AG04450 (cell line): ENCODE measurements at regions of chr6 and their contacts with region 1.

Region 1: GRCh38 chr6:147227770-147228320 is 23.6 kb downstream of the STXBP5 start:
- DNase-seq: no peak
- H3K4me3 ChIP-seq: no peak overlapping the region
- H3K27ac ChIP-seq: no peak overlapping the region
- H3K27me3 ChIP-seq: no peaks in the 10 kb centered on the region
- CTCF ChIP-seq: no peak

Region 2: GRCh38 chr6:147244832-147245231 is 17.0 kb after region 1 on chr6:
- CTCF ChIA-PET with region 1: interaction called, 10 read pairs
- POLR2A ChIA-PET with region 1: no interaction called
- DNase-seq: no peak
- H3K4me3 ChIP-seq: no peak overlapping the region
- H3K27ac ChIP-seq: no peak overlapping the region
- H3K27me3 ChIP-seq: no peaks in the 10 kb centered on the region
- CTCF ChIP-seq: no peak

Region 3: DNA sequence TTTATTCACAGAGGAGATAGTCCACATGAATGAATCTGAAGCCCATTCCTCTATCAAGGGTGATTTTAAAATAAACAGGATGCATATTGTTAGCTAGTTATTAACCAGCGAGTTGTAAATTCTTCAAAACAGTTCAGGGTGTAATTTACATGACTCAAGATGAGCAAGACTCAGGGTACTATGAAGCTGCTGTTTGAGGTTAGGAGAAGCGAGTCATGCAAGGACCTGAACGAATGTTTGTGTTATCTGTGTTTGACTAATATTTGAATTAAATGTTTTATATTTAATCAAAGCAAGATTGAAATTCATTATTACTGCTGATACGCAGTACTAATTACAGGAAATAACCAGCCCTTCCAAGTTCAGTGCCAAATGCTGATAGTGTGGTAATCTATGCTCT is 471.8 kb after region 1 on chr6:
- CTCF ChIA-PET with region 1: no interaction called
- POLR2A ChIA-PET with region 1: no interaction called
- DNase-seq: peak; percentile 33
- H3K4me3 ChIP-seq: no peak overlapping the region
- H3K27ac ChIP-seq: no peak overlapping the region
- H3K27me3 ChIP-seq: no peaks in the 10 kb centered on the region
- CTCF ChIP-seq: no peak